ENCODE measurements at regions of chr11 and their contacts with region 1.

Region 1: GRCh38 chr11:6251120-6251733 is 8.4 kb upstream of the CCKBR start:
- DNase-seq: peak; percentile 64 to 90
- H3K4me3 ChIP-seq: no peak overlapping the region
- H3K27ac ChIP-seq: no peak overlapping the region
- H3K4me1 ChIP-seq: no peaks in the 10 kb centered on the region
- H3K27me3 ChIP-seq: peaks cover 0 to 3% (median under 1%) of the 10 kb centered on the region in 4 experiments; a peak in 1 of 7 replicates
- CTCF ChIP-seq: peak; percentile 91 to 99 (median 97)
- EP300 ChIP-seq: no peak
- POLR2A ChIP-seq: no peak
- RAD21 ChIP-seq: peak; percentile 84 to 86

Region 2: GRCh38 chr11:6012035-6012668 is 239.1 kb before region 1 on chr11:
- CTCF ChIA-PET with region 1: interaction called, 11 read pairs
- POLR2A ChIA-PET with region 1: no interaction called
- DNase-seq: no peak
- H3K4me3 ChIP-seq: no peak overlapping the region
- H3K27ac ChIP-seq: no peak overlapping the region
- H3K4me1 ChIP-seq: no peaks in the 10 kb centered on the region; a peak in 1 of 7 replicates
- H3K27me3 ChIP-seq: no peaks in the 10 kb centered on the region
- CTCF ChIP-seq: no peak
- EP300 ChIP-seq: no peak
- POLR2A ChIP-seq: no peak
- RAD21 ChIP-seq: no peak

Region 3: DNA sequence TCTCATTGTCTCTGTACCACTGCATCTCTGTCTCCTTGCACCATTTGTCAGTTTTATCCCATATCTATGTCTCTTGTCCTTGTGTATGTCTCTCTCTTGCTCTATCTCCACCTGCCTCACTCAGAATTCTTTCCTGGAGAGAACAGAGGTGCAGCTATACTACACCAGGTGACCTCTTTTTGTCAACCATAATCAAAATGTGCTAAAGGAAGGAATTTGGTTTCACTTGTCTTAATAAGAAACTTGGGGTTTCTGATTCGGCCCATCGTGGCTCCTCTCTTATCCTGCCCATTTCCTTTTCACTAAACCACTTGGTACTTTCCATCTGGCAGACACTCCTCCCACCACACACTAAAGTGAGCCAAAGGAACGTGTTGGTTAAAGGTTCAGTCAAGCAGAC is 47.9 kb before region 1 on chr11:
- CTCF ChIA-PET with region 1: interaction called, 15 read pairs
- POLR2A ChIA-PET with region 1: no interaction called
- DNase-seq: no peak
- H3K4me3 ChIP-seq: no peak overlapping the region
- H3K27ac ChIP-seq: no peak overlapping the region
- H3K4me1 ChIP-seq: peaks cover 0 to 3% (median 1%) of the 10 kb centered on the region in 4 experiments; a peak in 2 of 7 replicates
- H3K27me3 ChIP-seq: no peaks in the 10 kb centered on the region
- CTCF ChIP-seq: no peak
- EP300 ChIP-seq: no peak
- POLR2A ChIP-seq: no peak
- RAD21 ChIP-seq: no peak

Region 4: DNA sequence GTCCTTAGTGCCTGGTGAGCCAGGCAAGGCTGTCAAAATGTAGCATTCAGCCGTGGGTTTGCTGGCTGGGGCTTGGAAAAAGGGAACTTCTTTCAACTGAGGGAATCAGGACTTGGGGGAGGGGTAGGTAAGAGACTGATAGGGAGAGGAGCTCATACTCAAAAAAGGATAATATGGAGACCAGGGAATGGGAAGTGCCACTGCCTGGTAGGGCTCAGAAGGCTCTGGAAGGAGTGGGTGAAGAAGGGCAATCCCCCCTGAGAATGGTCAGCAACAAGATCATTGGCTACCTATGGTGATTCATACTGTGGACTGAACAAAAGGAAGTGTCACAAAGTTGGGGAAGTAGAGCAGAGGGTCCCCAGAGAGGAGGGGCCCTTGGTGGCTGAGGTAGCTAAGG is 10.4 kb before region 1 on chr11:
- CTCF ChIA-PET with region 1: interaction called, 57 read pairs
- POLR2A ChIA-PET with region 1: no interaction called
- DNase-seq: no peak
- H3K4me3 ChIP-seq: no peak overlapping the region
- H3K27ac ChIP-seq: no peak overlapping the region
- H3K4me1 ChIP-seq: no peaks in the 10 kb centered on the region; a peak in 1 of 7 replicates
- H3K27me3 ChIP-seq: peaks cover 0 to 2% (median 1%) of the 10 kb centered on the region in 4 experiments; a peak in 1 of 7 replicates
- CTCF ChIP-seq: no peak
- EP300 ChIP-seq: no peak
- POLR2A ChIP-seq: no peak
- RAD21 ChIP-seq: no peak

Region 5: GRCh38 chr11:6285019-6285418 is 33.8 kb after region 1 on chr11:
- CTCF ChIA-PET with region 1: interaction called, 43 read pairs
- POLR2A ChIA-PET with region 1: no interaction called
- DNase-seq: no peak
- H3K4me3 ChIP-seq: no peak overlapping the region
- H3K27ac ChIP-seq: no peak overlapping the region
- H3K4me1 ChIP-seq: peaks cover 0 to 2% (median 0%) of the 10 kb centered on the region in 4 experiments; a peak in 2 of 7 replicates
- H3K27me3 ChIP-seq: peaks cover 12 to 75% (median 45%) of the 10 kb centered on the region in 4 experiments
- CTCF ChIP-seq: no peak
- EP300 ChIP-seq: no peak
- POLR2A ChIP-seq: no peak
- RAD21 ChIP-seq: no peak

Region 6: DNA sequence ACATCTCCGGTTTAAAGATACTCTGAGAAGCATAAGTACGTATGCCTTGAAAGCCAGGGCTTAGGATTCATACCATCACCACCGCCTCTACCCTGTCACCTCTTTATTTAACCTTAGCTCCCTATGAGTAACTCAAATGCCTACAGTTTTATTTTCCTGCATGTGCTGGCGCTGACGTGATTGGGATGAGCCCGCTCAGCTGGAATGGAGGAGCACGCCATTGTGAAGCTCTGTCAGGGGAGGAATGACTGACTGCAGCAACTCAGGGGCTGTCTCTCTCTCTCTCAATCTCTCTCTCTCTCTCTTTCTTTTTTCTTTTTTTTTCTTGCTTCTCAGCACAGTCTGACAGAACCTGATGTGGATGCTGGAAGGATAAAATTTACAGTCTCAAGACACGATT is 56.6 kb after region 1 on chr11:
- CTCF ChIA-PET with region 1: interaction called, 166 read pairs
- POLR2A ChIA-PET with region 1: interaction called, 3 read pairs
- DNase-seq: no peak
- H3K4me3 ChIP-seq: no peak overlapping the region
- H3K27ac ChIP-seq: no peak overlapping the region
- H3K4me1 ChIP-seq: peaks cover 0 to 7% (median 4%) of the 10 kb centered on the region in 4 experiments; a peak in 2 of 7 replicates
- H3K27me3 ChIP-seq: no peaks in the 10 kb centered on the region
- CTCF ChIP-seq: no peak
- EP300 ChIP-seq: no peak
- POLR2A ChIP-seq: no peak
- RAD21 ChIP-seq: no peak

Region 7: GRCh38 chr11:6321961-6322362 is 70.7 kb after region 1 on chr11:
- CTCF ChIA-PET with region 1: interaction called, 124 read pairs
- POLR2A ChIA-PET with region 1: interaction called, 3 read pairs
- DNase-seq: no peak
- H3K4me3 ChIP-seq: no peak overlapping the region
- H3K27ac ChIP-seq: no peak overlapping the region
- H3K4me1 ChIP-seq: peaks cover 12 to 47% (median 32%) of the 10 kb centered on the region in 4 experiments
- H3K27me3 ChIP-seq: peaks cover 0 to 3% (median 1%) of the 10 kb centered on the region in 4 experiments; a peak in 1 of 7 replicates
- CTCF ChIP-seq: no peak
- EP300 ChIP-seq: no peak
- POLR2A ChIP-seq: no peak
- RAD21 ChIP-seq: no peak

Measured in H1 (cell line).